ENCODE measurements at regions of chr2 and their contacts with region 1.

Region 1: GRCh38 chr2:25851740-25852503 is 26.4 kb downstream of the ASXL2 start:
- DNase-seq: peak; percentile 57
- ATAC-seq: peak; percentile 99
- H3K4me3 ChIP-seq: no peak overlapping the region
- H3K27ac ChIP-seq: no peak overlapping the region
- H3K4me1 ChIP-seq: peaks cover 9% of the 10 kb centered on the region
- H3K27me3 ChIP-seq: no peaks in the 10 kb centered on the region
- CTCF ChIP-seq: peak; percentile 46 to 79 (median 70); a peak in 5 of 6 replicates
- EP300 ChIP-seq: peak in 1 of 2 experiments; percentile 60; a peak in 2 of 4 replicates
- POLR2A ChIP-seq: no peak
- RAD21 ChIP-seq: peak; percentile 69

Region 2: GRCh38 chr2:25548601-25549000 is 303.3 kb before region 1 on chr2:
- CTCF ChIA-PET with region 1: no interaction called
- POLR2A ChIA-PET with region 1: no interaction called
- RAD21 ChIA-PET with region 1: no interaction called
- SMC1A ChIA-PET with region 1: no interaction called
- in situ Hi-C with region 1: no loop called
- intact Hi-C with region 1: no loop called
- DNase-seq: no peak
- ATAC-seq: no peak
- H3K4me3 ChIP-seq: no peak overlapping the region
- H3K27ac ChIP-seq: no peak overlapping the region
- H3K4me1 ChIP-seq: peaks cover 4% of the 10 kb centered on the region; the same call in 1 of the 2 replicates
- H3K27me3 ChIP-seq: no peaks in the 10 kb centered on the region
- CTCF ChIP-seq: no peak
- EP300 ChIP-seq: no peak
- POLR2A ChIP-seq: no peak
- RAD21 ChIP-seq: no peak

Region 3: DNA sequence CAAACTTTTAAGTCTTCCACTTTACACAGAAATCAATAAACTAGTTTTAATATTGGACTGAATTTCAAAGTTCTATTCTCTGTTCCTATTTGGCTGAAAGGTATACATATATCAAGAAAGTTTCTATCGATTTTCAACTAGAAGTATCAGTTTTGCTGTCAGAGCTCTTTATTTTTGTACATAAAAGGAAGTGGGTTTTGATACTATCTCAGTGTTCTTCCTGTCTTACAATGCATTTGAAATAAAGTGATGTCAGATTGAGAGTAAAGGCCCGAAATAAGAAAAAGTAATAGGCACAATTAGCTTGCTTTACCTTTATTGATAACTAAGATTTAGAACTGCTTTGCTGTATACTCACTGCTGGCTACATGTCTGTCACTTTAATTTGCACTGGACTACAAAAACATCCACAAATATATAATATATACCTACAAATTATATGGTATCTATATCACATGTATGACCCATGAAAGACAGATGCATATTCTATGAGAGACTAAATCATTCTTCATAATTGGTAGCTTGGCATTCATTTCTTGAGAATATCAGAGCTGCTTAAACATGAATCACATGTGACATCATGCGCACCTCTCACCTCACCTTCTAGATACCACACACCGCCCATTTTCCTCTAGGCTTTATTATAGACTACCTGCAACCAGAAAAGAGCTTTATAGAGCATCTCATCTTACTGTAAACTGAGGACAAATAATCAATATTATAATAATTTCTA is 57.2 kb before region 1 on chr2:
- CTCF ChIA-PET with region 1: interaction called, 15 read pairs
- POLR2A ChIA-PET with region 1: no interaction called
- RAD21 ChIA-PET with region 1: interaction called, 3 read pairs
- SMC1A ChIA-PET with region 1: interaction called, 14 read pairs
- in situ Hi-C with region 1: no loop called
- intact Hi-C with region 1: no loop called
- DNase-seq: peak; percentile 16
- ATAC-seq: peak; percentile 81
- H3K4me3 ChIP-seq: peak overlapping the region; percentile 25; the same call in 1 of the 2 replicates
- H3K27ac ChIP-seq: peak overlapping the region; percentile 13; the same call in 1 of the 2 replicates
- H3K4me1 ChIP-seq: peaks cover 5% of the 10 kb centered on the region; the same call in 1 of the 2 replicates
- H3K27me3 ChIP-seq: no peaks in the 10 kb centered on the region
- CTCF ChIP-seq: no peak
- EP300 ChIP-seq: no peak
- POLR2A ChIP-seq: no peak
- RAD21 ChIP-seq: no peak

Region 4: GRCh38 chr2:25822190-25823117 is 29.5 kb before region 1 on chr2:
- CTCF ChIA-PET with region 1: interaction called, 24 read pairs
- POLR2A ChIA-PET with region 1: no interaction called
- RAD21 ChIA-PET with region 1: interaction called, 3 read pairs
- SMC1A ChIA-PET with region 1: no interaction called
- in situ Hi-C with region 1: no loop called
- intact Hi-C with region 1: no loop called
- DNase-seq: no peak
- ATAC-seq: peak; percentile 64
- H3K4me3 ChIP-seq: peak overlapping the region; percentile 27; the same call in 1 of the 2 replicates
- H3K27ac ChIP-seq: 0 out of 2 replicates have a peak overlapping the region, but pooled peaks have one; percentile 26
- H3K4me1 ChIP-seq: peaks cover 9% of the 10 kb centered on the region
- H3K27me3 ChIP-seq: no peaks in the 10 kb centered on the region
- CTCF ChIP-seq: no peak
- EP300 ChIP-seq: no peak
- POLR2A ChIP-seq: peak; percentile 52; the same call in 1 of the 2 replicates
- RAD21 ChIP-seq: no peak

Region 5: GRCh38 chr2:25838152-25838756 is 13.7 kb before region 1 on chr2:
- CTCF ChIA-PET with region 1: interaction called, 19 read pairs
- POLR2A ChIA-PET with region 1: interaction called, 3 read pairs
- RAD21 ChIA-PET with region 1: no interaction called
- SMC1A ChIA-PET with region 1: interaction called, 22 read pairs
- in situ Hi-C with region 1: no loop called
- intact Hi-C with region 1: no loop called
- DNase-seq: no peak
- ATAC-seq: no peak
- H3K4me3 ChIP-seq: no peak overlapping the region
- H3K27ac ChIP-seq: no peak overlapping the region
- H3K4me1 ChIP-seq: no peaks in the 10 kb centered on the region
- H3K27me3 ChIP-seq: no peaks in the 10 kb centered on the region
- CTCF ChIP-seq: no peak
- EP300 ChIP-seq: no peak
- POLR2A ChIP-seq: no peak
- RAD21 ChIP-seq: no peak

Region 6: GRCh38 chr2:25878361-25879132 is 26.6 kb after region 1 on chr2 and contains the start of gene ASXL2:
- CTCF ChIA-PET with region 1: interaction called, 35 read pairs
- POLR2A ChIA-PET with region 1: interaction called, 9 read pairs
- RAD21 ChIA-PET with region 1: interaction called, 12 read pairs
- SMC1A ChIA-PET with region 1: interaction called, 17 read pairs
- in situ Hi-C with region 1: no loop called
- intact Hi-C with region 1: no loop called
- DNase-seq: peak; percentile 92
- ATAC-seq: peak; percentile 94
- H3K4me3 ChIP-seq: peak within 1 kb of the TSS; percentile 88
- H3K27ac ChIP-seq: peak within 1 kb of the TSS; percentile 90
- H3K4me1 ChIP-seq: peaks cover 5% of the 10 kb centered on the region
- H3K27me3 ChIP-seq: no peaks in the 10 kb centered on the region
- CTCF ChIP-seq: no peak
- EP300 ChIP-seq: no peak
- POLR2A ChIP-seq: peak; percentile 95
- RAD21 ChIP-seq: no peak
- polyA plus RNA-seq, gene ASXL2: 1.3 to 1.5 TPM

Region 7: DNA sequence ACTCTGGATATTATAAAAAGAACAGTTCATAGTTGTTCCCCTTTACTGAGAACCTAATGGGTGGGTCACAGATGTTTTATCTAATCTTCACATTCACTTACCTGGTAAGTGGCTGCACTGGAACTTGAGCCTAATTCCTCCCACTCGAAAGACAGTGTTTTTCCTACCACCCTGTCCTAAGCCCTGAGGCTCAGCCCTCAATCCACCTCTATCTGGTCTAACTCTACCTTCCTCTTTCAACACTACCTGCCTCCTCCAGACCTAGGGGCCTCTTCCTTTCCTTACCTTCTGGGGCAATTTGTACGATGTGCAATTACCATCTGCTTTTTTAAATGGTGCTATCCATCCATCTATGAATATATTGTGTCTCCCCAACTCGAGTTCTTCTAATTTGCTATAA is 140.0 kb after region 1 on chr2:
- CTCF ChIA-PET with region 1: interaction called, 26 read pairs
- POLR2A ChIA-PET with region 1: no interaction called
- RAD21 ChIA-PET with region 1: interaction called, 8 read pairs
- SMC1A ChIA-PET with region 1: interaction called, 13 read pairs
- in situ Hi-C with region 1: no loop called
- intact Hi-C with region 1: loop called (anchors 1 kb)
- DNase-seq: no peak
- ATAC-seq: peak; percentile 50
- H3K4me3 ChIP-seq: no peak overlapping the region
- H3K27ac ChIP-seq: no peak overlapping the region
- H3K4me1 ChIP-seq: no peaks in the 10 kb centered on the region
- H3K27me3 ChIP-seq: no peaks in the 10 kb centered on the region
- CTCF ChIP-seq: no peak
- EP300 ChIP-seq: no peak
- POLR2A ChIP-seq: no peak
- RAD21 ChIP-seq: no peak

Measured in GM12878 (cell line).